ENCODE measurements at regions of chr16 and their contacts with region 1.

Region 1: DNA sequence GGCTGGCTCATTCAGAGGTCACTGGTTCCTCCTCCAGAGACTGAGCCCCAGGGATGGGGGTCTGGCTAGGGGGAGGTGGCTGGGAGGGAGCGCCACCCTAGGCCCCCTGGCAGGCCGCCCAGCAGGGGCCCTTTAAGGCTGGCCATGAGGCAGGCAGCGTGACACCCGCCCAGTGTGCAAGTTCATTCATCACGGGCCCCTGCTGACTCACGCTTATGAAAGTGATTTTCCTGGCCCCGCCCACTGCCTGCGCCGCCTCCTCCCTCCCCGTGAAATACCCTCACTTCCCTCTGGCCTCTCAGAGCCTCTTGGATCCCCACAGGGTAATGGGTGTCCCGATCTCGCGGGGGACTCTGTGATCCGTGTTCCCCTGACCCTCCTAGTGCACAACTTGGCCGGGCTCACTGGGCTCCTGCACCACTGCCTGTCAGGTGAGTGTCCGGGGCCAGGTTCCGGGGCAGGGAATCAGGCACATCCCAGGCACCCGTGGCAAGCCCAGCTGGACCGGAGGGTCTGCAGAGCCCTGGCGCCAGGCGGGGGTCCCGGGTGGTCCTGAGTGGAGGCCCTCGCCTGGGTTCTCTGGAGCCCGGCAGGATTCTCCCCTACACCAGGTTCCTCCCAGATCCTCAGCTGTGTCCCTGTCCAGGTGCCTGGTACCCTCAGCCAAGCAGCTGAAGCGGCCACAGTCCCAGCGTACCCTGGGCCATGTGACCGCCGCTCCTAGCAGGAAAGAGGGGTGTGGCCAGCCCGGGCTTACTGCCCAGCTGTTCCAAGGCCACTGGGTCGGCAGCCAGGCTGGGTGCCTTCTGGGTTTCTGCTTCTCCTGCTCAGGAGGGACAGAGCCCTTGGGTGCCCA is at the start of gene OSGIN1:
- DNase-seq: peak; percentile 88
- ATAC-seq: peak; percentile 87
- H3K4me3 ChIP-seq: peak within 1 kb of the TSS; percentile 79
- H3K27ac ChIP-seq: peak within 1 kb of the TSS; percentile 72
- H3K4me1 ChIP-seq: peaks cover 15% of the 10 kb centered on the region
- H3K27me3 ChIP-seq: no peaks in the 10 kb centered on the region
- CTCF ChIP-seq: no peak
- total RNA-seq, gene OSGIN1: 6.6 and 9.8 TPM in 2 replicates

Region 2: GRCh38 chr16:83926726-83927397 is 26.3 kb before region 1 on chr16:
- CTCF ChIA-PET with region 1: interaction called, 7 read pairs
- POLR2A ChIA-PET with region 1: no interaction called
- intact Hi-C with region 1: loop called (anchors 1 kb)
- DNase-seq: peak; percentile 86
- ATAC-seq: peak; percentile 91
- H3K4me3 ChIP-seq: peak overlapping the region; percentile 70
- H3K27ac ChIP-seq: peak overlapping the region; percentile 81
- H3K4me1 ChIP-seq: peaks cover 10% of the 10 kb centered on the region
- H3K27me3 ChIP-seq: no peaks in the 10 kb centered on the region
- CTCF ChIP-seq: peak; percentile 84

Region 3: GRCh38 chr16:84062734-84063640 is 109.8 kb after region 1 on chr16:
- CTCF ChIA-PET with region 1: no interaction called
- POLR2A ChIA-PET with region 1: no interaction called
- intact Hi-C with region 1: loop called (anchors 5 kb)
- DNase-seq: peak; percentile 69
- ATAC-seq: peak; percentile 96
- H3K4me3 ChIP-seq: no peak overlapping the region
- H3K27ac ChIP-seq: no peak overlapping the region
- H3K4me1 ChIP-seq: no peaks in the 10 kb centered on the region
- H3K27me3 ChIP-seq: no peaks in the 10 kb centered on the region
- CTCF ChIP-seq: peak; percentile 86

Region 4: DNA sequence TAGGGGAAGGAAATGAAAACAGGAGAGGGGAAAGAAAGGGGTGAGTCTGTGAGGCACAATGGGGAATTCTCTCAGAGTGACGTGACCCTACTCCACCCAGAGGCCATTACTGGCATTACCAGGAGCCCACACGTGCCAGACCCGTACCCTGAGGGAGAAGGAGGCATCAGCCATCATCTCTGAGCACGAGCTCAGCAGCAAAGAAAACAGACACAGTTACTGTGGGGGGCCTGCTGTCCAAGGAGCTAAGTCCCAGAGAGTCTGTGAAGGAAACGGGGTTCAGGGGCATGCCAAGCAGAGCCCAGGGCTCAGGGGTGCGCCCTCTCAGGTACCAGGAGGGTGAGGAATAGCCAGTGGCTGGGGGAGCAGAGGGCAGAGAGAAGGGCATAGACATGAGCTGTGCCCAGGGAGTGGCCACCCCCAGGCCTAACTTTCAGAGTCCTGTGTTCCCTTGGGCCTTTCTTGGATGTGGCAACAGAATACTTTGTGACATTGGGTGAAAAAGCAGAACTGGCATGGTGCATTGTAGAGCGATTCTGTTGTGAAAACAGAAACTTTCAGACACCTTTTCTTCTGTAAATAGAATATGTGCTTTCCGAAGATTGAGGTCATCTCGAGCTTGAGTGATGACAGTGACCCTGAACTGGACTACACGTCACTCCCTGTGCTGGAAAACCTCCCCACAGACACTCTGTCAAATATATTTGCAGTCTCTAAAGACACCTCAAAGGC is 222.3 kb after region 1 on chr16:
- CTCF ChIA-PET with region 1: no interaction called
- POLR2A ChIA-PET with region 1: no interaction called
- intact Hi-C with region 1: loop called (anchors 5 kb)
- DNase-seq: peak; percentile 72
- ATAC-seq: peak; percentile 67
- H3K4me3 ChIP-seq: no peak overlapping the region
- H3K27ac ChIP-seq: no peak overlapping the region
- H3K4me1 ChIP-seq: peaks cover 20% of the 10 kb centered on the region
- H3K27me3 ChIP-seq: no peaks in the 10 kb centered on the region
- CTCF ChIP-seq: peak; percentile 75

Measured in PC-3 (cell line).